Endothelial cell of umbilical vein (primary cell): ENCODE measurements at regions of chr10 and their contacts with region 1.

Region 1: GRCh38 chr10:63707254-63707910 is 186.2 kb downstream of the REEP3 start:
- DNase-seq: peak; percentile 99
- H3K4me3 ChIP-seq: no peak overlapping the region
- H3K27ac ChIP-seq: peak overlapping the region; percentile 74
- H3K4me1 ChIP-seq: peaks cover 32% of the 10 kb centered on the region
- H3K27me3 ChIP-seq: no peaks in the 10 kb centered on the region
- CTCF ChIP-seq: no peak
- POLR2A ChIP-seq: no peak

Region 2: GRCh38 chr10:63430097-63430998 is 277.0 kb before region 1 on chr10:
- CTCF ChIA-PET with region 1: no interaction called
- POLR2A ChIA-PET with region 1: no interaction called
- dilution Hi-C with region 1: no loop called
- intact Hi-C with region 1: loop called (anchors 2 kb)
- DNase-seq: peak; percentile 83
- H3K4me3 ChIP-seq: no peak overlapping the region
- H3K27ac ChIP-seq: peak overlapping the region; percentile 92
- H3K4me1 ChIP-seq: peaks cover 55% of the 10 kb centered on the region
- H3K27me3 ChIP-seq: no peaks in the 10 kb centered on the region
- CTCF ChIP-seq: no peak
- POLR2A ChIP-seq: no peak

Region 3: GRCh38 chr10:63521416-63522276 is 185.7 kb before region 1 on chr10:
- CTCF ChIA-PET with region 1: no interaction called
- POLR2A ChIA-PET with region 1: no interaction called
- dilution Hi-C with region 1: no loop called
- intact Hi-C with region 1: loop called (anchors 2 kb)
- DNase-seq: peak; percentile 80
- H3K4me3 ChIP-seq: peak overlapping the region; percentile 50 to 93 (median 62)
- H3K27ac ChIP-seq: peak overlapping the region; percentile 90
- H3K4me1 ChIP-seq: peaks cover 7% of the 10 kb centered on the region
- H3K27me3 ChIP-seq: no peaks in the 10 kb centered on the region
- CTCF ChIP-seq: no peak
- POLR2A ChIP-seq: peak; percentile 74

Region 4: DNA sequence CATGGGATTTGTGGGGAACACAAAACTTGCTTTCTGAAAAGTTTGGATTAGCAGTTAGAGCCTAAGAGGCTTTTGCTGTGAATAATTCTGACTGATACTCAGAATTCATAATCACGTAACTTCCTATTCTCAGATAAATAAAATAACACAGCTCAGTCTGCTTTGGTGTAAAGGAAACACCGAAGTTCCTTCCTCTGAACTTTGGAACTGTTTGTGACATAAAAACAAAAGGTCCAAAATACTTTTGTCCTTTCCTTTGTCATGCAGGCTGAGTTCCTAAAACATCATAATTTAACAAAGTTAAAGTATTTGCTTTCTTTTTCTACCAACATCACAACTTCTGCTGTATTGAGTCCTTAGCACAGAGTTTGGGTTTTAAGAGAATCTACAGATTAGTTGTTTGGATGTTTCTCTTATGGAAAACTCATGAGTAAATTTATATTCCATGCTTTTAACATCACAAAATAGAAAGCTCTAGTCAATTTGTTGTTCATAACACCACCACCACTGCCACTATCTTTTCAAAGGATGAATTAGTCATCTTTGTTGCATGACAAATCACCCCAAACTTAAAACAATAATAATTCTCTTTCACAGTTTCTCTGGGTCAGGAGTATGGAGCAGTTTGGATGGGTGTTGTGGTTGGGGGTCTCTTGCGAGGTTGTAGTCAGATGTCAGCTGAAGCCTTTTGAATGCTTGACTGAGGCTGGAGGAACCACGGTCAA is 62.8 kb before region 1 on chr10:
- CTCF ChIA-PET with region 1: interaction called, 8 read pairs
- POLR2A ChIA-PET with region 1: no interaction called
- dilution Hi-C with region 1: no loop called
- intact Hi-C with region 1: loop called (anchors 1 kb)
- DNase-seq: peak; percentile 88
- H3K4me3 ChIP-seq: peak overlapping the region in 1 of 3 experiments; percentile 10
- H3K27ac ChIP-seq: peak overlapping the region; percentile 86
- H3K4me1 ChIP-seq: peaks cover 33% of the 10 kb centered on the region
- H3K27me3 ChIP-seq: no peaks in the 10 kb centered on the region
- CTCF ChIP-seq: no peak
- POLR2A ChIP-seq: peak; percentile 42

Region 5: GRCh38 chr10:63657761-63658160 is 49.6 kb before region 1 on chr10:
- CTCF ChIA-PET with region 1: no interaction called
- POLR2A ChIA-PET with region 1: no interaction called
- dilution Hi-C with region 1: no loop called
- intact Hi-C with region 1: no loop called
- DNase-seq: no peak
- H3K4me3 ChIP-seq: no peak overlapping the region
- H3K27ac ChIP-seq: no peak overlapping the region
- H3K4me1 ChIP-seq: no peaks in the 10 kb centered on the region
- H3K27me3 ChIP-seq: no peaks in the 10 kb centered on the region
- CTCF ChIP-seq: no peak
- POLR2A ChIP-seq: no peak

Region 6: GRCh38 chr10:63744060-63744941 is 36.9 kb after region 1 on chr10:
- CTCF ChIA-PET with region 1: no interaction called
- POLR2A ChIA-PET with region 1: no interaction called
- dilution Hi-C with region 1: no loop called
- intact Hi-C with region 1: no loop called
- DNase-seq: no peak
- H3K4me3 ChIP-seq: no peak overlapping the region
- H3K27ac ChIP-seq: no peak overlapping the region
- H3K4me1 ChIP-seq: no peaks in the 10 kb centered on the region
- H3K27me3 ChIP-seq: peaks cover 0 to 4% of the 10 kb centered on the region in 2 experiments
- CTCF ChIP-seq: no peak
- POLR2A ChIP-seq: no peak

Region 7: DNA sequence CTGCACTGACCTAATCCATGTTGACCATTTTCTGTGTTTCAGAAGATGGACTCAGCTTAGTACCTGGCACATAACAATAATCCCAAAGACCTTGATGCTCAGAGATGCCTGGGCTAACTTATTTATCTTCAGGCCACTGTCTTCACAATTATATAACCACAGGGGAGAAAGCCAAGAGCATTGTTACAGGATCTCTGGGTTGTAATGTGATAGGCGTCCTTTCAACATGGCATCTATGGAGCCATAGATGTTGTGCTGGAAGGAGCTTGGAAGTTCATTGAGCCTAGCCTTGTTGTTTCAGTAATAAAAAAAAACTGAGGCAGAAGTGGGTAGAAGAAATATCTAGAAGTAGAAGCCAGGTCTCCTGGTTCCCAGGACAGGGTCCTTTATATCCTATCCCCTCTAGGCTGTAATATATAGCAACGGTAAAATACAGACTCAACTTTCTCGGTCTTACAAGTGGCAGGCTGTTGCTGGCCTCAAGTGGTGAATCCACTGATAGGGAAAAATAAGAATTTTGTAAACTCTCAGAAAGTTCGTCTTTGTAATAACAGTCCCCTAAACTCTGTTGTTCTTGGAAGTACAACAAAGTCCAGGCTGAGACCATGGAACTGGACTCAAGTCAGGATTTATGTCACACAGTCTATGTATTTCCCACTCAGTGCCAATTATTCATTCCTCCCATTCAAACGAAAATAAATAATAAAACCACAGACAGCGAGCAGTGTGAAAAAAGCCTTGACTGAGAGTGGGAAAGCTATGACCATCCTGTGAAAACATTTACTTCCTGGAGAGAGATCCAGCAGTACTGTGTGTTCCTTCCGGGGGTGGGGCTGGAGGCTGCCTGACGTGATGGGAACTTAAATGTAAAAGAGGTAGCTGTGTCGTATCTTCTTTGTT is 91.5 kb after region 1 on chr10:
- CTCF ChIA-PET with region 1: no interaction called
- POLR2A ChIA-PET with region 1: no interaction called
- dilution Hi-C with region 1: no loop called
- intact Hi-C with region 1: loop called (anchors 1 kb)
- DNase-seq: peak; percentile 97
- H3K4me3 ChIP-seq: peak overlapping the region in 1 of 3 experiments; percentile 22
- H3K27ac ChIP-seq: peak overlapping the region; percentile 88
- H3K4me1 ChIP-seq: peaks cover 16% of the 10 kb centered on the region
- H3K27me3 ChIP-seq: no peaks in the 10 kb centered on the region
- CTCF ChIP-seq: no peak
- POLR2A ChIP-seq: peak; percentile 50

Region 8: DNA sequence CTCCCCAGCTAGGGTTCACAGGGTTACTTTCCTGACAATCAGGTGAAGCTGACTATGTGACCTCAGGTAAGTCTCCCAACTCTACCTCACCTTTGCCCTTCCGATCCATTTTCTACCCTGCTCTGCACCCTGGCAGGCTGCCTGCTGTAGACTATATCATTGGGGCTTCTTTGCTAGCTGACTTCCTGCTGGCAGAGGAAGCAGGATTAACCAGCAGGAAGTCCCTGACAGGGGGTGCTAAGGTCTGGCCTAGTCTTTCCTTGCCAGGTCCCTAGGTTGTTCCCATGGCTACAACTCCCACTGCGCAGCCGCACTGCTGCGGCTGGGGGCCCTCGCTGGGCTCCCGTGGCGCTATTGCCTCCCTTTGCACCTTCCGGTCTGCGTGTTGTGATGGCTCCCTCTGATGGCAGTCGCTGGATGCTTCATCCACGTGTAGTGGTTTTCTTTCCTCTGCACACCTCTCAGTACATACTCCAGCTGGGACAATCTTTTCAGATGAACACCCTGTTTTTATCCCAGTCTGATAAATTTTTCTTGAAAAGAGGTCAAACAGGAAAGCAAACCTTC is 179.7 kb after region 1 on chr10:
- CTCF ChIA-PET with region 1: no interaction called
- POLR2A ChIA-PET with region 1: no interaction called
- dilution Hi-C with region 1: no loop called
- intact Hi-C with region 1: no loop called
- DNase-seq: no peak
- H3K4me3 ChIP-seq: no peak overlapping the region
- H3K27ac ChIP-seq: no peak overlapping the region
- H3K4me1 ChIP-seq: no peaks in the 10 kb centered on the region
- H3K27me3 ChIP-seq: no peaks in the 10 kb centered on the region
- CTCF ChIP-seq: no peak
- POLR2A ChIP-seq: no peak